ENCODE measurements at regions of chr11 and their contacts with region 1.

Region 1: DNA sequence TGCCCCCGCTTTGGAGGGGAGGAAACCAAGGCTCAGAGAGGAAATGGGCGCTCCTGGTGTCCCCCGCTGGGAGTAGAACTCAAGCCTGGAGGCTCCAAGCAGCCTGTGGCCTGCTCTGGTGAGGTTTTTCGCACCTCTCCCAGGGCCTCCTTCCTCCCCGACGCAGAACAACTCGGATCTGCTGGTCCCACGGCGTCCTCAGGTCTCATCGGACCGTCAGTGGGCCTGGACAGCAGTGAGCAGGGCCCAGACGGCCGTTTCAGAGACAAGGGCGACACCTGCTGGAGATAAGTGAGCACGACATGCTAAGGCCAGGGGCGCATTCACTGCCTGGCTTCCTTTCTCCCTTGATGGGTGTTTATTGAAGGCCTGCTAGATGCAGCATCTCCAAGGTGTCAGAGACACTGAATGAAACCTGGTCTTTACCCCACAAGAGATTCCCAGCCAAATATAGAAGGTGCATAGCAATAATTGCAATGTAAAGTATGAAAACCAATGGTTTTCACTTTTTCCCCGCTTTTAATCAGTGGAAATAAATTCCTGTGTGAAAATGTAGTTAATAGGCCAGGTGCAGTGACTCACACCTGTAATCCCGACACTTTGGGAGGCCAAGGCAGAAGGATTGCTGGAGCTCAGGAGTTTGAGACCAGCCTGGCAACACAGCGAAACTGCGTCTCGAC is 26.9 kb upstream of the CD82 start:
- DNase-seq: peak; percentile 76 to 89 (median 87)
- ATAC-seq: peak; percentile 93 to 95
- H3K4me3 ChIP-seq: no peak overlapping the region
- H3K27ac ChIP-seq: no peak overlapping the region
- H3K4me1 ChIP-seq: no peaks in the 10 kb centered on the region
- H3K27me3 ChIP-seq: no peaks in the 10 kb centered on the region

Region 2: GRCh38 chr11:44095506-44096394 is 442.8 kb before region 1 on chr11 and contains the start of gene EXT2:
- intact Hi-C with region 1: loop called in 3 of 4 experiments (anchors 5 to 10 kb)
- DNase-seq: peak; percentile 91 to 97 (median 95)
- ATAC-seq: peak; percentile 96 to 97
- H3K4me3 ChIP-seq: peak within 1 kb of the TSS; percentile 87
- H3K27ac ChIP-seq: peak within 1 kb of the TSS; percentile 84
- H3K4me1 ChIP-seq: peaks cover 3% of the 10 kb centered on the region
- H3K27me3 ChIP-seq: no peaks in the 10 kb centered on the region
- total RNA-seq, gene EXT2: 32.5 to 41.5 (median 35.3) TPM

Region 3: DNA sequence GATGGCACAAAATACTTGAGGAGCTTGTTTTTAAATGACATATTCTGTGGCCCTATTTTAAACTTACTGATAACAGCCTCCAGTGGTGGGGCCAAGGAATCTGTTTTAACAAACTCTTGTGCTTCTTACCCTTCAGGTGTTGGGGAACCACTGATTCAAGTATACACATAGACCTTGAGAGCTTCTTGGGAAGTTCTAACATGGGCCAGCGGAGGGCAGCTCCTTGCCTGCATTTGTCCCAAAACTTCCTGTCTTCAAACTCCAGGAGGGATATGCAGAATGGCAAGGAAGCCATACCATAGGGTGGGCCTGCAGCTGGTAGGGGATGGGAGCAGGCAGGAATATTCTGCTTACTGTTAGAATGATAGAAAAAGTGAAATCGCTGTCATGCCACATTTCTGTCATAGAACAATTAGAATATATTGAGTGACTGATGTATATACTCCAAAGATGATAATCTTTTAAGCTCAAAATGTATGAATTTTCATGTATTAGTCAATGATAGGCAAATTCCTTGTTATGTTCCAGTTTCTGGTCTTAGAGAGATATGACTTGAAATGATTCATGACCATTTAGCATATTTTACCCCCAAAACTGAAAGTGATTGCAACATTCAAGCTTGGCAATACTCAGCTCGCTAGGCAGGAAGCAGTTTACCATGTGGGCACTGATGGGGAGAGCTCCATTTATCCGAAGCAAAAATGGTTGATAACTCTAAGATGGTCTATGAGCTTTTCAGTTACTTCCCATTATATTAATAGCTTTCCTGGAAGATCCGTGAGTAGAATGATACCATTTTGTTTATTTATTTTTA is 433.8 kb before region 1 on chr11:
- intact Hi-C with region 1: loop called in 3 of 4 experiments (anchors 5 to 10 kb)
- DNase-seq: no peak
- ATAC-seq: no peak
- H3K4me3 ChIP-seq: no peak overlapping the region
- H3K27ac ChIP-seq: no peak overlapping the region
- H3K4me1 ChIP-seq: peaks cover 2% of the 10 kb centered on the region
- H3K27me3 ChIP-seq: no peaks in the 10 kb centered on the region

Region 4: DNA sequence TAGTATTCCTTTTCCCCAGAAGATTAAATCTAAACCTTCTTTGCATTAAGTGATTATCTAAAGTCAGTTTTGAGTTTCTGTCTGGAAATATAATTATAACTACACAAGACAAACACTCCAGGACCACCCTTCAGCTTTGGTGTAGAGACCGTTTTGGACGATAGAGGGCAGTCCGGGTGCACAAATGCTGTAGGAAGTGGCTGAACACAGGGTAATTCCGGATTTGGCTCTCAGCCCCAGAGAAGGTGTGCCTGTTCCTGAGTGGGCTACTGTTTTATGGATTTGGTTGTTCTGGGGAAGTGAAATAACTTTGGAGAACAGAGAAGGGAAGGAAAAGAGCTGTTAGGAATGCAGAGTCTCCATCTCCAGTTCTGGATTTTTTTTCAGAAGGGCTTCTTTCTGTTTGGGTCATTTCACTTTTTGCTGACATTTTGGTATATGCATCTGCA is 428.3 kb before region 1 on chr11:
- intact Hi-C with region 1: loop called in 2 of 4 experiments (anchors 5 to 10 kb)
- DNase-seq: peak; percentile 49 to 78 (median 69)
- ATAC-seq: peak; percentile 81 to 84
- H3K4me3 ChIP-seq: no peak overlapping the region
- H3K27ac ChIP-seq: no peak overlapping the region
- H3K4me1 ChIP-seq: peaks cover 8% of the 10 kb centered on the region
- H3K27me3 ChIP-seq: no peaks in the 10 kb centered on the region

Region 5: GRCh38 chr11:44133335-44133946 is 405.1 kb before region 1 on chr11:
- intact Hi-C with region 1: loop called in 2 of 4 experiments (anchors 10 kb)
- DNase-seq: no peak
- ATAC-seq: no peak
- H3K4me3 ChIP-seq: no peak overlapping the region
- H3K27ac ChIP-seq: no peak overlapping the region
- H3K4me1 ChIP-seq: no peaks in the 10 kb centered on the region
- H3K27me3 ChIP-seq: no peaks in the 10 kb centered on the region

Region 6: GRCh38 chr11:44286268-44286880 is 252.1 kb before region 1 on chr11:
- intact Hi-C with region 1: loop called (anchors 2 to 5 kb)
- DNase-seq: peak in 2 of 3 donors; percentile 49 to 70
- ATAC-seq: peak in 1 of 2 donors; percentile 78
- H3K4me3 ChIP-seq: no peak overlapping the region
- H3K27ac ChIP-seq: no peak overlapping the region
- H3K4me1 ChIP-seq: no peaks in the 10 kb centered on the region
- H3K27me3 ChIP-seq: no peaks in the 10 kb centered on the region

Region 7: GRCh38 chr11:44309483-44310205 is 228.9 kb before region 1 on chr11 and contains the start of gene ALX4:
- intact Hi-C with region 1: no loop called
- DNase-seq: peak; percentile 40 to 78 (median 73)
- ATAC-seq: peak; percentile 65 to 75
- H3K4me3 ChIP-seq: peak within 1 kb of the TSS; percentile 24
- H3K27ac ChIP-seq: no peak within 1 kb of the TSS
- H3K4me1 ChIP-seq: peaks cover 3% of the 10 kb centered on the region
- H3K27me3 ChIP-seq: no peaks in the 10 kb centered on the region
- total RNA-seq, gene ALX4: not detected